ENCODE measurements at regions of chr5 and their contacts with region 1.

Region 1: GRCh38 chr5:39217365-39218281 is 1.7 kb downstream of the FYB1 start:
- DNase-seq: peak; percentile 88

Region 2: DNA sequence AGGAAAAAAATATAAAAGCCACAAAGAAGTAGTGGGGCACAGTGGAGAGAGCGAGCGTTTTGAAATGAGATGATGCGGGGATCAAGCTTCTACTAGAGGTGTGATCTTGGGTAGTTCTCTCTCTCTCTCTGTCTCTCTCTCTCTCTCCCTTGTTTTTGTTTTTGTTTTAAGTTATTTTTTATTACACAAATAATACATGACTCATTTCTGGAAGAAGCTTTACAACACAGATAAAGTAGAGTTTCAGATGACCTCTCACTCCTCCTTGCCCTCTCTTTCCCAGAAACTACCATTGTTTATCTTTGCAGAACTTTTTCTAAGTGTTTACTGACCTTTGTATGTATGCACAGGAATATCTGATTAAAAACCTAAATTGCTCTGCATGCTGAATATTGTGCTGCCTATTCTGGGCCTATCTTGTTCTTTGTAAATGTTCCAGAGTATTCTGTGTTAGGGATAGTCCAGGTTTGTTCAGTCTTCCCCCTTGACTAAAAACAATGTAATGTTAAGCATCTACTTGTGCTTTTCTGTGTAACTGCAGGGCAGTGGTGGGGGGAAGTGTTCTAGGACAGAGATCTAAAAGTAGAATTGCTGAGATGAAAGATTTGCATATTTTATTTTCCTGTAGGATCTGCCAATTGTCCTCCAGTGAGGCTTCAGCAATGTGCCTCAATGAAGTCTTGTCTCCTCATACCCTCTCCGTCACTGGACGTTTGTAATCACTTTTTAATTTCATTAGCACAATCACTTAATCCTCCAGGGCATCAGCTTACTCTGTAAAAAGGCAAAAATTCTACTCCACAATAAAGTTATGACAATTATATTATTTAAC is 50.3 kb before region 1 on chr5:
- intact Hi-C with region 1: no loop called
- DNase-seq: no peak

Region 3: GRCh38 chr5:39231705-39232525 is 14.3 kb after region 1 on chr5:
- intact Hi-C with region 1: no loop called
- DNase-seq: no peak

Region 4: GRCh38 chr5:39547553-39548154 is 330.0 kb after region 1 on chr5:
- intact Hi-C with region 1: loop called in 1 of 2 experiments (anchors 10 kb)
- DNase-seq: no peak

Measured in posterior vena cava (tissue), 2 donors.